ENCODE measurements at regions of chr9 and their contacts with region 1.

Region 1: GRCh38 chr9:34899535-34900158 is 58.4 kb upstream of the PHF24 start:
- DNase-seq: peak; percentile 73 to 75
- ATAC-seq: peak; percentile 99 to 100
- H3K4me3 ChIP-seq: no peak overlapping the region
- H3K27ac ChIP-seq: no peak overlapping the region
- H3K4me1 ChIP-seq: no peaks in the 10 kb centered on the region
- CTCF ChIP-seq: peak; percentile 89
- EP300 ChIP-seq: no peak
- POLR2A ChIP-seq: no peak
- RAD21 ChIP-seq: peak; percentile 90 to 93

Region 2: GRCh38 chr9:34927061-34927460 is 27.4 kb after region 1 on chr9:
- CTCF ChIA-PET with region 1: interaction called, 13 read pairs
- POLR2A ChIA-PET with region 1: no interaction called
- DNase-seq: no peak
- ATAC-seq: no peak
- H3K4me3 ChIP-seq: no peak overlapping the region
- H3K27ac ChIP-seq: no peak overlapping the region
- H3K4me1 ChIP-seq: no peaks in the 10 kb centered on the region
- CTCF ChIP-seq: no peak
- EP300 ChIP-seq: no peak
- POLR2A ChIP-seq: no peak
- RAD21 ChIP-seq: no peak

Region 3: GRCh38 chr9:34964458-34964857 is 64.8 kb after region 1 on chr9:
- CTCF ChIA-PET with region 1: interaction called, 25 read pairs
- POLR2A ChIA-PET with region 1: no interaction called
- DNase-seq: no peak
- ATAC-seq: no peak
- H3K4me3 ChIP-seq: no peak overlapping the region
- H3K27ac ChIP-seq: no peak overlapping the region
- H3K4me1 ChIP-seq: no peaks in the 10 kb centered on the region
- CTCF ChIP-seq: no peak
- EP300 ChIP-seq: no peak
- POLR2A ChIP-seq: no peak
- RAD21 ChIP-seq: no peak

Region 4: DNA sequence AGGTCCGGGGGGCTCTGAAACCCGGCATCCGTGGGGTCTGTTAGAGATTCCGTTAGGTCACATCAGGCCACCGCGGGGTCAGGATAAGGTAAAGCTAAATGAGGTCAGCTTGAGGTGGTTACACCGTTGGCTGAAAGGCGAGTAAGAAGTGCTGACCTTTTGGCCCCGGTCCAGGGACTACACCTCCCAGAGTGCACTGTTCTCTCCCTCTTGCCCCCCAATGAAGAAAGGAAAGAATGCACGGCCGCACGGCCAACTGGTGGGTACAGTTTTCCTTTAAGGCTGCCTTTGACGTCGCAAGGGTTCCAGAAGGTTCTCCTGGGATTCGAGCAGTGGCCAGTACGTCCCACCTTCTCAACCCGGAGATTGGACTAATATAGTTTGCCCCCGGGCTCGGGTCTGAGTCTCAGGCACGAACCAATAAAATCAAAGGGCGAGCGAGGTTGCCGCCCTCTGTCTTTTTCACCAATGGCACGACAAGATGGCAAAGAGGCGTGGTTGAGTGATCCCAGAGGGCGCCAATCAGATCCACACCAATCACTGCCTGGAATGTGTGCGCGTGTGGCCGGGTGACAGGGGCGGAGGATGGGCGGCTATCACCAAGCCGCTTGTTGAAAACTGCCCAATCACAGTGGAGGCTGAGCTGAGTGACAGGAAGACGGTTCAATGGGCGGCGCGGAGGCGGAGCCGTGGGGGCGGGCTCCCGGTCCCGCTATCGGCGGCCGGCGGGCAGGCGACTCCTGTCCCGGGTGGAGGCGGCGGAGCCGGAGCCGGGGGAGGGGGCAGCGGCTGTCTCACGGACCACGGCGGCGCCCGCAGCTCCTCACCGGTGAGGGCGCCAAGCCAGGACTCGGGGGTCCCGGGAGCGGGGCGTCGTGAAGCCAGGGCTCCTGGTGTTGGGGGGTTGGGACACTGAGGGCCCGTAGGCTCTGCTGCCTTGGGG is 89.6 kb after region 1 on chr9 and contains the start of gene DNAJB5:
- CTCF ChIA-PET with region 1: interaction called, 132 read pairs
- POLR2A ChIA-PET with region 1: interaction called, 8 read pairs
- DNase-seq: peak; percentile 99
- ATAC-seq: peak; percentile 86 to 95
- H3K4me3 ChIP-seq: peak within 1 kb of the TSS; percentile 60
- H3K27ac ChIP-seq: peak within 1 kb of the TSS; percentile 56 to 83
- H3K4me1 ChIP-seq: peaks cover 37% of the 10 kb centered on the region
- CTCF ChIP-seq: no peak
- EP300 ChIP-seq: no peak
- POLR2A ChIP-seq: peak; percentile 53
- RAD21 ChIP-seq: no peak
- polyA plus RNA-seq, gene DNAJB5: 0.72 and 1.6 TPM in 2 replicates

Region 5: DNA sequence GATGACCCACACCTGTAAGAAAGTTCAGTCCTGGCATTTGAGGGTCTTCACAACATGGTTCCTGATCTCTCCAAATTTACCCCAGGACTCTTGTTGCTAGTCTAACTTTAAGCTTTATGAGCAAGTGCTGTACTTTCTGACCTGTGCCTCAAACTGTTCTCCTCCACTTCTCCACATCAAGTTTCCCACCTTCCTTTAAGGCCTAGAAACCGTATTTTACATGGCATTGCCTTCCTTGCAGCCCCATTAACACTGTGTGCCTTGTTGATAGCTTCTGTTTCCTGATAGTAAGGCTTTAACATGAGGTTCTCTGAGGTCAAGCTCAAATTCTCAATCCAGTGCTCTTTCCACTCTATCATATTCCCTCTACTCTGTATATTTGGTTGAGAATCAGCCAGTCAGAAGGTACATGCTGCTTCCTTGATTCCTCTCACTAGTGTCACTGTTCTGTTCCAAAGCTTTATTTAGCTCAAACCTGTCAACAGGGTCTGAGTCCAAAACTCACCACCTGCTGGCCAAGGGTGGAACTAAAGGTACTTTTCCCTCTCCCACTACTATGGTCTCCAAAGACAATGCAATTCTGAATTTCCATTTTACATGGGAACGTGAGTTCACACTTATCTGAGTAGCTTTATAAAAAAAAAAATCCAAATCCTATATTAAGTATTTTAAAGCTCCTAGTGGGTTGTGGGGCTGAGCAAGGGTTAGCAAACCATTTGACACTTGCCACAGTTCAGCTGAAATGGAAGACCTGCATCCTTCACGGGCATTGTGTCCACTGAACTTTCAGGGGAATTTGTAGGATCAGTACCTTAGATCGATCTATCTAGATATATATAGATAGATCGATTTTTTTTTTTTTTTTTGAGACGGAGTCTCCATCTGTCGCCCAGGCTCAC is 151.7 kb after region 1 on chr9:
- CTCF ChIA-PET with region 1: interaction called, 29 read pairs
- POLR2A ChIA-PET with region 1: interaction called, 3 read pairs
- DNase-seq: peak; percentile 46 to 52
- ATAC-seq: peak; percentile 78 to 86
- H3K4me3 ChIP-seq: no peak overlapping the region
- H3K27ac ChIP-seq: no peak overlapping the region
- H3K4me1 ChIP-seq: no peaks in the 10 kb centered on the region
- CTCF ChIP-seq: peak; percentile 52; the same call in 1 of the 3 replicates
- EP300 ChIP-seq: no peak
- POLR2A ChIP-seq: no peak
- RAD21 ChIP-seq: peak in 1 of 2 experiments; percentile 33; a peak in 3 of 5 replicates

Region 6: GRCh38 chr9:35096035-35096849 is 196.6 kb after region 1 on chr9 and contains the start of gene PIGO:
- CTCF ChIA-PET with region 1: interaction called, 38 read pairs
- POLR2A ChIA-PET with region 1: no interaction called
- DNase-seq: peak; percentile 89 to 94
- ATAC-seq: peak; percentile 95 to 96
- H3K4me3 ChIP-seq: peak within 1 kb of the TSS; percentile 66
- H3K27ac ChIP-seq: peak within 1 kb of the TSS; percentile 94
- H3K4me1 ChIP-seq: peaks cover 12% of the 10 kb centered on the region
- CTCF ChIP-seq: peak; percentile 82
- EP300 ChIP-seq: no peak
- POLR2A ChIP-seq: peak; percentile 71
- RAD21 ChIP-seq: peak; percentile 49 to 58
- polyA plus RNA-seq, gene PIGO: 50.4 and 60.0 TPM in 2 replicates

Region 7: DNA sequence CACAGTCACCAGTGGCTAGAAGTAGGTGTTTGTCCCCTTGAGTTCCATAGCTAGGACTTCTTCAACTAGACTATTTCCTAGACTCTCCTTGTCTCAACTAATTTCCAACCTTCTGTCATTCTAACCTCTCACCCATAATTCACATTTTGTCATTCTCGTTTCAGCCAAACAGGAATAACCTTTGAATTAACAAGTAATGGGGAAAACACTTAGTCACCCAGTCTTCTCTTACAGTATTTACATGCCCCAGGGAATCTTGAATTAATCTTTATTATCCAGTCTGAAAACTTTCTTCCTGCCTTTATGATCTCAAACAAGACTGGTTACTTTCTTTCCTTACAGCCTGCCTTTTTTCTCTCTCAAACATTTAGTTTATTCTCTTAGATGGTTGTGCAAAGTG is 527.0 kb after region 1 on chr9:
- CTCF ChIA-PET with region 1: no interaction called
- POLR2A ChIA-PET with region 1: no interaction called
- DNase-seq: no peak
- ATAC-seq: no peak
- H3K4me3 ChIP-seq: no peak overlapping the region
- H3K27ac ChIP-seq: no peak overlapping the region
- H3K4me1 ChIP-seq: peaks cover 11% of the 10 kb centered on the region; the same call in 1 of the 3 replicates
- CTCF ChIP-seq: no peak
- EP300 ChIP-seq: no peak
- POLR2A ChIP-seq: no peak
- RAD21 ChIP-seq: no peak

Region 8: GRCh38 chr9:35553670-35554543 is 654.3 kb after region 1 on chr9:
- CTCF ChIA-PET with region 1: interaction called, 15 read pairs
- POLR2A ChIA-PET with region 1: no interaction called
- DNase-seq: peak; percentile 69 to 85
- ATAC-seq: peak; percentile 84 to 89
- H3K4me3 ChIP-seq: no peak overlapping the region; the same call in 2 of the 3 replicates
- H3K27ac ChIP-seq: peak overlapping the region; percentile 83 to 87
- H3K4me1 ChIP-seq: peaks cover 44% of the 10 kb centered on the region
- CTCF ChIP-seq: peak; percentile 98
- EP300 ChIP-seq: no peak
- POLR2A ChIP-seq: no peak
- RAD21 ChIP-seq: peak; percentile 98 to 99

Measured in A549 (cell line).